ENCODE measurements at regions of chr11 and their contacts with region 1.

Region 1: DNA sequence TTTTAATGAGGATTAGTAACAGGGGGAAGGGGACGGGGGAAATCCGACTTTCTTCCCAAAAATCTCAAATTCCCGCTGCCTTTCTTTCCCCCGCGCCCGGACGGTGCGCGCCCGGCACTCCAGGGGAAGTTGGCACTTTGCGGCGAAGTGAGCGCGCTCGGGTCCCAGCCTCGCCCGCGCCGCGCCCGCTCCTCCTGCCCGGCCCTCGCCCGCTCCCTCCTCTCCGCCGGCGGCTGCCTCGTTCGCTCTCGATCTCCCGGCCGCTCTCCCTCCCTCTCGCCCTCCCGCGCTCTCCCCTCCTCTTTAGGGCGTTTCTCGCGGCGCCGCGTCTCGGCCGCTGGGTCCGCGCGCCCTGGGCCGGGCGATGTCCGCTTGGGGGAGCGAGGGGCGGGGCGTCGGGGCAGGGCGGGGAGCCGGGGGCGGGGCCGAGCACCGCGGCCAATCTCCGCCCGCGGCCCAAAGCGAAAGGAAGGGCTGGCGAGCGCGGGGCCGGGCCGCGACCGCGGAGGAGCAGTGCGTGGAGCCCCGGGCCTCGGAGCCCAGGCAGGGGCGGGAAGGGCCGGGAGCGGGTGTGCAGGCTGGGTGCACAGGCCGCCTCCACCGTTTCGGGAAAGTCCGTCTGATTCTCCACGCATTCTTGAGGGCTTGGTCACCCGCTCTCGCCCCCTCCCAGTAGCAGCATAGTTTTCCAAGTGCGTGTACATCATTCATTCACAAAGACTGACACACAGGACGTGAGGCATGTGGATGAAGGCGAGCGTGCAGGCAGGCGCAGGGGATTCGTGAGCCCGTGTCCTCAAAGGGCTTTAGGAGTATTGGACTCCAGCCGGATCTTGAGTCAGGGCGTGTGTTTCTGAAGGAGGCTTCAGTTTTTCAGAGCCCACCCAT is 65.1 kb downstream of the ETS1 start:
- DNase-seq: peak; percentile 94
- H3K4me3 Mint-ChIP-seq: peak overlapping the region; percentile 97
- H3K27ac Mint-ChIP-seq: peak overlapping the region; percentile 88
- H3K4me1 Mint-ChIP-seq: peaks cover 44% of the 10 kb centered on the region
- H3K27me3 Mint-ChIP-seq: no peaks in the 10 kb centered on the region

Region 2: DNA sequence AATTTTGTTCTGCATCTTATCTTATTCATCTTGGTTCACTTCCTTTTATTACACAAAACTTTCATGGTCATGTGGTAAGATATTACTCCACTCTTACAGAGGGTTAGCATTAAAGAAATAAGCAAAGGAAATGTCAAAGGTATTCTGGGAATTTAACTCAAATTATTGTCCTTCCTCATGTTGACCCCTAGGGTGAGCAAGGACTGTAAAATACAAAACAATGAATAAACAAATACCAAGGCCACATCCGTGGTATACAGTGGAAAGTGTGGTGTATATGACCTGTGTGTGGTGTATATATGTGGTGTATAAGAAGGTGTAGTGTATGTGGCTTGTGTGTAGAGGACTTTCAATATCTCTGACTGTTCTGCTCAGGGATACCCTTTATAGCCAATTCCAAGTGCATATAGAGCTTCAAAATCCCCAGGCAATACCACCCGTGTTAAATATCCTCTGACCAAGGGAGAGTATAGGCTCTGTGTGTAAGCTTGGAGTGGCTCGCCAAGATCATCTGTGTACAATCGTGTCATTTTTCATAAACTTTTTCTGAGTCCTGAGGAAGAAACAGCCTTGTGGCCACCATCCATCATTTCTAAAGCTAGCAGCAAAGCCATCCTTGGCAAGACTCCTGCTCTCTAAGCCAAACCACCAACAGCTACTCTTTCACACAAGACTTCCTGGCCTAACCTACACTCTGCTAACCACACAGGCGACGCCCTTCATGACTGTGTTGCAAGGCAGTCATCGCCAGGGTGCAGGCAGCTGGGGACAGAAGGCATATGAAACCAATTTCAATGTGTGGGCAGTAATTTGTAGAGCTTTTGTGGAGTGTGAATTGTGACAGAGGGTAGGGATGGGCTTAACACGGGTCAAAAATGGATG is 482.9 kb before region 1 on chr11:
- CTCF ChIA-PET with region 1: interaction called, 3 read pairs
- POLR2A ChIA-PET with region 1: interaction called, 10 read pairs
- DNase-seq: peak; percentile 89
- H3K4me3 Mint-ChIP-seq: peak overlapping the region; percentile 64
- H3K27ac Mint-ChIP-seq: peak overlapping the region; percentile 98
- H3K4me1 Mint-ChIP-seq: peaks cover 48% of the 10 kb centered on the region
- H3K27me3 Mint-ChIP-seq: no peaks in the 10 kb centered on the region

Region 3: GRCh38 chr11:128472128-128473089 is 49.9 kb before region 1 on chr11:
- CTCF ChIA-PET with region 1: interaction called, 7 read pairs
- POLR2A ChIA-PET with region 1: interaction called, 884 read pairs
- DNase-seq: no peak
- H3K4me3 Mint-ChIP-seq: peak overlapping the region; percentile 44
- H3K27ac Mint-ChIP-seq: peak overlapping the region; percentile 80
- H3K4me1 Mint-ChIP-seq: peaks cover 99% of the 10 kb centered on the region
- H3K27me3 Mint-ChIP-seq: no peaks in the 10 kb centered on the region

Region 4: GRCh38 chr11:128497061-128497775 is 25.1 kb before region 1 on chr11:
- CTCF ChIA-PET with region 1: interaction called, 28 read pairs
- POLR2A ChIA-PET with region 1: interaction called, 1,025 read pairs
- DNase-seq: no peak
- H3K4me3 Mint-ChIP-seq: peak overlapping the region; percentile 58
- H3K27ac Mint-ChIP-seq: peak overlapping the region; percentile 87
- H3K4me1 Mint-ChIP-seq: peaks cover 96% of the 10 kb centered on the region
- H3K27me3 Mint-ChIP-seq: no peaks in the 10 kb centered on the region

Region 5: DNA sequence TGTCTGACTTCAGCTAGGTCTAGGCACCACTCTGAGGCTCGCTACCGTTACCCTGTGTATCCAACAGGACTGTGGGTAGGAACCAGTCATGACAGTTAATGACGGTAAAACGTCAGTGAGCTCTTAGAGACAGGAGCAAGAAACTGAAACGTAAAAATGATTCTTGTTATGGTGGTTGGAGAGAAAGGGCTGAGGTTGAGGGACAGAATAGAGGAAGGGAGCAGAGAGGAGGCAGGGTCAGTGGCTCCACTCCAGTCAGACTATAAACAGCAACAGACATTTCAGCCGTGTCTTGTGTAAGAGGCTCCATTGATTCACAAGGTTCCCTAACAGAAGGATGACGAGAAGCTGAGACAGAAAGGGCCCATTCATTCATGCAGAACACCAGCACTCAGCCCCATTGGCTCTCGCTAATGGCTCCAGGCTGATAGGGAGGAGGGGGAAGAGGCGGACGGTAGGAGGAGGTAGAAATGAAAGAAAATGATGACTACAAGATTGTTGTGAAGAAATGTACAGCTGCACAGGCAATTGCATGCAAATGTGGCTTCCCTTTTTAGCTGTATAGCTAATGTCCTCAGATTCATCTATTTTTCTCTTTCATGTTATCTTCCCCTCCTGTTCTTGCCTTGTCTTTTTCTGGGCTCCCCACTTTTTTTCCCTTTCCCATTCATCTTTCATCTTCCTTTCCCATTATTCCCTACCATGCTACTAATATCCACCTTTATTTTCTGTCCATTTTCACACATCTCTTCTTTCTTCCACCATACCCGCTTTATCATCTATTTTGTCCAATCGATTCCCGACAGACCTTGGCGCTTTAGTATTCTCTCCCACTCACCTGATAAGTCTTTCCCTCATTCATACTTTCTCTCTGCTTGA is 30.7 kb after region 1 on chr11:
- CTCF ChIA-PET with region 1: interaction called, 5 read pairs
- POLR2A ChIA-PET with region 1: interaction called, 83 read pairs
- DNase-seq: peak; percentile 30
- H3K4me3 Mint-ChIP-seq: peak overlapping the region; percentile 27
- H3K27ac Mint-ChIP-seq: peak overlapping the region; percentile 89
- H3K4me1 Mint-ChIP-seq: peaks cover 56% of the 10 kb centered on the region
- H3K27me3 Mint-ChIP-seq: no peaks in the 10 kb centered on the region

Region 6: GRCh38 chr11:128572965-128573364 is 50.7 kb after region 1 on chr11:
- CTCF ChIA-PET with region 1: no interaction called
- POLR2A ChIA-PET with region 1: no interaction called
- DNase-seq: no peak
- H3K4me3 Mint-ChIP-seq: no peak overlapping the region
- H3K27ac Mint-ChIP-seq: no peak overlapping the region
- H3K4me1 Mint-ChIP-seq: peaks cover 7% of the 10 kb centered on the region
- H3K27me3 Mint-ChIP-seq: no peaks in the 10 kb centered on the region

Region 7: GRCh38 chr11:128653801-128654231 is 131.5 kb after region 1 on chr11:
- CTCF ChIA-PET with region 1: no interaction called
- POLR2A ChIA-PET with region 1: no interaction called
- DNase-seq: no peak
- H3K4me3 Mint-ChIP-seq: no peak overlapping the region
- H3K27ac Mint-ChIP-seq: no peak overlapping the region
- H3K4me1 Mint-ChIP-seq: peaks cover 2% of the 10 kb centered on the region
- H3K27me3 Mint-ChIP-seq: peaks cover 34% of the 10 kb centered on the region

Region 8: DNA sequence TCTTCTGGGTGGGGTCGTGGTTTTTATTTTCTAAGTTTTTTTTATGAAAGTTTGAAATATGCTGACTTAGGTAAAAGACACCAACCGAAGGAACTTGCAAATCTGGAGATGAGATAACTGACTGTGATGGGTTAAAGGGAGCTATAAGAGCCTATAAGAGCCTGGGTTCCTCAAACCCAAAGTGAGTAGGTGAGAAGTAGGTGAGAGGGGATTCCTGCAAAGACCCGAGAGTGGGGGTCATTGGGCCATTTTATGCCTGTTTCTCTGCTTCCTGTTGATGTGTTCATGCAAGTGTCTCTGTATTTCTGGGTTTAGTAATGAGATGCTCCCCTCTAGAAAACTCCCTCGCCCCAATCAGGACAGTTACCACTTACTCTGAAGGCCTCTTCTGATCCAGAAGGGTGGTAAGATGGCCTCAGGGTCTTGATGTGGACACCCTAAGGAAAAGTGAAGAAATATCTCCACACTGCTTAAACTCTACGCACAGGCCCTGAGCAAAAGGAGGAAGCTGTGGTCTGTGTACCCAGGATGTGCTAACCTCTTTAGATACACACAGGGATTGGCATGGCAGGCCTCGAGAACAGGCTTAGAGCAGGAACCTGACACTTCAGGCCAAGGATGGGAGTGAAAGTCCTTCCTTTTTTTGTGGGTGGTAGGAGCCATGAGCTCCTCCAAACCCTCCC is 173.4 kb after region 1 on chr11:
- CTCF ChIA-PET with region 1: interaction called, 3 read pairs
- POLR2A ChIA-PET with region 1: interaction called, 39 read pairs
- DNase-seq: peak; percentile 67
- H3K4me3 Mint-ChIP-seq: peak overlapping the region; percentile 98
- H3K27ac Mint-ChIP-seq: peak overlapping the region; percentile 97
- H3K4me1 Mint-ChIP-seq: peaks cover 58% of the 10 kb centered on the region
- H3K27me3 Mint-ChIP-seq: peaks cover 10% of the 10 kb centered on the region